Activated naive CD4-positive, alpha-beta T cell treated with anti-CD3 and anti-CD28 coated beads for 36 hours (primary cell): ENCODE measurements at regions of chr10 and their contacts with region 1.

Region 1: GRCh38 chr10:68720793-68721672 is at the start of gene CCAR1:
- DNase-seq: peak; percentile 98
- H3K4me3 Mint-ChIP-seq: peak within 1 kb of the TSS; percentile 96
- H3K27ac Mint-ChIP-seq: peak within 1 kb of the TSS; percentile 96
- H3K4me1 Mint-ChIP-seq: peaks cover 16% of the 10 kb centered on the region
- H3K27me3 Mint-ChIP-seq: no peaks in the 10 kb centered on the region
- total RNA-seq, gene CCAR1: 80.7 to 87.9 TPM

Region 2: DNA sequence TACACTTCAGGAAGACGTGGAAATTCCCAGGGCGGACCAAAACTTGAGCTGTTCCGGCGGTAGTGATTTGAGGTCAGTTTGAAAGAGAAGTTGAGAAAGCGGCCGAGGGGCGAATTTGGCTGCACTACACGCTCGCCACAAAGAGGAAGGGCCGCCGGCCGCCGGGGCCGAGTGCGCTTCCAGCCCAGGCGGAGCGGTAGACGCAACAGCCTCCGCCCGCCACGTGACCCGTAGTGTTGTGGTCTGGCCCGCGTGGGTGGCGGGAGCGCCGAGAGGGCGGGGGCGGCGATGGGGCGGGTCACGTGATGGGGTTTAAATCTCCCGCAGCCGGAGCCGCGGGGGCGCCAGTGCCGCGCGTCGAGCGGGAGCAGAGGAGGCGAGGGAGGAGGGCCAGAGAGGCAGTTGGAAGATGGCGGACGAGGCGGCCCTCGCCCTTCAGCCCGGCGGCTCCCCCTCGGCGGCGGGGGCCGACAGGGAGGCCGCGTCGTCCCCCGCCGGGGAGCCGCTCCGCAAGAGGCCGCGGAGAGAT is 836.7 kb before region 1 on chr10 and contains the start of gene SIRT1:
- CTCF ChIA-PET with region 1: no interaction called
- intact Hi-C with region 1: loop called (anchors 10 kb)
- DNase-seq: peak; percentile 88
- H3K4me3 Mint-ChIP-seq: peak within 1 kb of the TSS; percentile 90
- H3K27ac Mint-ChIP-seq: peak within 1 kb of the TSS; percentile 89
- H3K4me1 Mint-ChIP-seq: peaks cover 25% of the 10 kb centered on the region
- H3K27me3 Mint-ChIP-seq: no peaks in the 10 kb centered on the region
- total RNA-seq, gene SIRT1: 18.7 to 18.8 TPM

Region 3: GRCh38 chr10:68406815-68407548 is 314.1 kb before region 1 on chr10 and contains the start of gene RUFY2:
- CTCF ChIA-PET with region 1: no interaction called
- intact Hi-C with region 1: loop called (anchors 1 kb)
- DNase-seq: peak; percentile 73
- H3K4me3 Mint-ChIP-seq: peak within 1 kb of the TSS; percentile 89
- H3K27ac Mint-ChIP-seq: peak within 1 kb of the TSS; percentile 59
- H3K4me1 Mint-ChIP-seq: peaks cover 16% of the 10 kb centered on the region
- H3K27me3 Mint-ChIP-seq: no peaks in the 10 kb centered on the region
- total RNA-seq, gene RUFY2: 5.2 to 6.7 TPM

Region 4: GRCh38 chr10:68526626-68527307 is 194.3 kb before region 1 on chr10:
- CTCF ChIA-PET with region 1: no interaction called
- intact Hi-C with region 1: loop called (anchors 1 kb)
- DNase-seq: no peak
- H3K4me3 Mint-ChIP-seq: peak overlapping the region; percentile 93
- H3K27ac Mint-ChIP-seq: peak overlapping the region; percentile 87
- H3K4me1 Mint-ChIP-seq: peaks cover 5% of the 10 kb centered on the region
- H3K27me3 Mint-ChIP-seq: no peaks in the 10 kb centered on the region

Region 5: GRCh38 chr10:68600041-68600778 is 120.8 kb before region 1 on chr10:
- CTCF ChIA-PET with region 1: no interaction called
- intact Hi-C with region 1: loop called (anchors 1 kb)
- DNase-seq: peak; percentile 64
- H3K4me3 Mint-ChIP-seq: peak overlapping the region; percentile 83
- H3K27ac Mint-ChIP-seq: peak overlapping the region; percentile 84
- H3K4me1 Mint-ChIP-seq: peaks cover 28% of the 10 kb centered on the region
- H3K27me3 Mint-ChIP-seq: no peaks in the 10 kb centered on the region

Region 6: DNA sequence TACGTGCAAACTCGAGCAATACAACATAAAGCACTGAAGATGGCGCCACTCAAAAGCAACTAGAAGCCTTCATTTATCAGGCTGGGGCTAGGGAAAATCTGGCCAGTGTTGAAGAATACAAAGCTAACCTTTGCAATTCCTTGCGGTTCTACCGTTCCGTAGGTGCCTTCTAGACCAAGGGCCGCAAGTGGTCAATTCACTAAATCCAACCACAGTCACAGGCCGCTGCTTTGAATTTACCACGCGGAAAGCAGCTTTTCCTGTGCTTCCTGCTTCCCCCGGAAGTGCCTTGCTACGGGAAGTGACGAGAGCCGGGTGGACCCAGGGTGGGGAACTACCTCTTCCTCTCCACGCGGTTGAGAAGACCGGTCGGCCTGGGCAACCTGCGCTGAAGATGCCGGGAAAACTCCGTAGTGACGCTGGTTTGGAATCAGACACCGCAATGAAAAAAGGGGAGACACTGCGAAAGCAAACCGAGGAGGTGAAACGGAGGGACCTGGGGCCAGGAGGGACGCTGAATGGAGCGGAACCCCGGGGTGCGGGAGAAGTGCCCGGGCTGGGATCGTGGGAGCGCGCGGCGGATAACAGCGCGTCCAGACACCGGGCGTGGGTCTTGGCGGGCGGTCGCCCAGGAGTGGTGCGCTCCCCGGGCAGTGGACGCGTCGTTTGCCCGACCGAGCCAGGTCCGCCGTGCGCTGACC is 234.9 kb after region 1 on chr10 and contains the start of gene DDX21:
- CTCF ChIA-PET with region 1: no interaction called
- intact Hi-C with region 1: loop called (anchors 1 kb)
- DNase-seq: peak; percentile 94
- H3K4me3 Mint-ChIP-seq: peak within 1 kb of the TSS; percentile 100
- H3K27ac Mint-ChIP-seq: peak within 1 kb of the TSS; percentile 100
- H3K4me1 Mint-ChIP-seq: peaks cover 44% of the 10 kb centered on the region
- H3K27me3 Mint-ChIP-seq: no peaks in the 10 kb centered on the region
- total RNA-seq, gene DDX21: 155 to 164 TPM